ENCODE measurements at regions of chr18 and their contacts with region 1.

Region 1: DNA sequence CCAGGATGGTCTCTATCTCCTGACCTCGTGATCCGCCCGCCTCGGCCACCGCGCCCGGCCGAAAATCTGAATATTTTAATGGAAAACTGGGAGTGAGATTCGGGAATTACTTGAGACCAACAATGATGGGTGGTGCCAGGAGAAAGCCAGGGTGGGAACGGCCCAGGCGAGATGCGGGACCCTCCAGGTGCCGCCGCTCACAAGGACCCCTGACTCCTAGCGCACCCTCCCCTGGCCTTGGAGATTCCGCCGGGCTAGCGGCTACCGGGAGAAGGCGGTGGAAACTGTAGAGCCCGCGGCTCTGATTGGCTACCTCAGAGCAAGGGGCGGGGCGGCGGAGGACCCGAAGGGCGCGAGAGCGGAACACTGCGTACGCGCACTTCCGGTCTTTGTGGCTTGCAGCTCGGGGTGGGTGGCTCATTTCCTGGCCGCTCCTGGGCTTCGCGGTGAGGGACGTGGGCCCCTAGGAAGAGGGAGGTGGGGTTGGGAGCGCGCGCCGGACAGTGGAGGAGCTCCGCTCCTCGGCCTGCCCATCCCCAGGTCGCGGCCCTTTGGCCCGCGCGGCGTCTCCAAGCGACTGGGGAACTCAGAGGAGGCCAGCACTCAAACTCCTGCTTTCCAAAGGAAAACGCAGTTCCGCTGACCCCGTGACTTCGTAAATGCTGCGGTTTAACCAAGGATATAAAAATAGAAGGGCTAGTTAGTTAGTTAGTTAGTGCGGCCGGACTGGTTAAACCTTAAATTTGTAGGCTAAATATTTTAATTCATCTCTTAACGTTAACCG is at the start of gene ZNF397:
- DNase-seq: peak; percentile 94
- H3K4me3 Mint-ChIP-seq: peak within 1 kb of the TSS; percentile 94
- H3K27ac Mint-ChIP-seq: peak within 1 kb of the TSS; percentile 98
- H3K4me1 Mint-ChIP-seq: peaks cover 11% of the 10 kb centered on the region
- H3K27me3 Mint-ChIP-seq: no peaks in the 10 kb centered on the region
- total RNA-seq, gene ZNF397: 14.6 and 18.4 TPM in 2 replicates

Region 2: DNA sequence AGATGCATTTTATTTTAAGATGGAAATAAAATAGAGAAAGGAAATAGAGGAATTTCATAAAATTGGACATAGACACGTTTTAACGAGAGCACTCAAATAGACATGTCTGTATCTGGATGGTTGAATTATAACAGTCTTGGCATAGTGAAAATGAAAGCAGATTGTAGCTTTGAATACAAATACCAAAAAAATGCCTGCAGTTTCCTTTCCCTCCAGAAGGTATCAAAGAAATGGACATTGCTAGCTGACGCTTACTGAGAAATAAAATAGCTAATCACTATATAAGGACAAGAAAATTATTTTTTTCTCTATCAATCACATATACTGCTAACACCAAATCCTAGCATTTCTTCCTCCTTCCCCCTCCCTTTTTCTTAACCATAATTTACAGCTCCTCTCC is 211.1 kb before region 1 on chr18:
- intact Hi-C with region 1: loop called (anchors 5 kb)
- DNase-seq: no peak
- H3K4me3 Mint-ChIP-seq: peak overlapping the region; percentile 80
- H3K27ac Mint-ChIP-seq: peak overlapping the region; percentile 98
- H3K4me1 Mint-ChIP-seq: peaks cover 54% of the 10 kb centered on the region
- H3K27me3 Mint-ChIP-seq: no peaks in the 10 kb centered on the region

Region 3: GRCh38 chr18:35290073-35290735 is 49.3 kb after region 1 on chr18 and contains the start of gene ZSCAN30:
- intact Hi-C with region 1: loop called (anchors 1 kb)
- DNase-seq: peak; percentile 93
- H3K4me3 Mint-ChIP-seq: peak within 1 kb of the TSS; percentile 98
- H3K27ac Mint-ChIP-seq: peak within 1 kb of the TSS; percentile 94
- H3K4me1 Mint-ChIP-seq: peaks cover 29% of the 10 kb centered on the region
- H3K27me3 Mint-ChIP-seq: no peaks in the 10 kb centered on the region
- total RNA-seq, gene ZSCAN30: 15.5 and 19.9 TPM in 2 replicates

Region 4: DNA sequence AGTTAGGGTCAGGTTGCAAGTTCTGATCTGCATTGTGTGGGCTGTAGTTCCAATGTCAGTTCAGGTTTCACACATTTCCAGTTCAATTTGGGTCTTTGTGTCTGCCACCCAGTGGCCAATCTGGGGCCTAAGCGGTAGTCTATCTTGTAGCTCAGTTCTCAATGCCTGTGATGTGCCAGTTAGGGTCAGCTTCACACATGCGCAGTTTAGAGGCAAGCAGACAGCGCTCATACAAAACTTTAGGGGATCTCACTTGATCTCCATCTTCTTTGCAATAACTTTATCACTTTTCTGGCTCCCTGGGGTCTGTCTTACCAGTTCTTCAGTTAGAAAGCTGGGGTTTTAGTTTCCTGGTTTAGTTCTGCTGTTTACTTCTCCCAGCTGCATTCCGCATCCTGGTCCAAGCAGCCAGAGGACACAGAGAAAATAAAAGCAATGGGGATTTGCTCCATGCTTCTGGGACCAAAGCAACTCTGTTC is 114.3 kb after region 1 on chr18:
- intact Hi-C with region 1: no loop called
- DNase-seq: peak; percentile 31
- H3K4me3 Mint-ChIP-seq: no peak overlapping the region
- H3K27ac Mint-ChIP-seq: no peak overlapping the region
- H3K4me1 Mint-ChIP-seq: peaks cover 2% of the 10 kb centered on the region
- H3K27me3 Mint-ChIP-seq: no peaks in the 10 kb centered on the region

Region 5: DNA sequence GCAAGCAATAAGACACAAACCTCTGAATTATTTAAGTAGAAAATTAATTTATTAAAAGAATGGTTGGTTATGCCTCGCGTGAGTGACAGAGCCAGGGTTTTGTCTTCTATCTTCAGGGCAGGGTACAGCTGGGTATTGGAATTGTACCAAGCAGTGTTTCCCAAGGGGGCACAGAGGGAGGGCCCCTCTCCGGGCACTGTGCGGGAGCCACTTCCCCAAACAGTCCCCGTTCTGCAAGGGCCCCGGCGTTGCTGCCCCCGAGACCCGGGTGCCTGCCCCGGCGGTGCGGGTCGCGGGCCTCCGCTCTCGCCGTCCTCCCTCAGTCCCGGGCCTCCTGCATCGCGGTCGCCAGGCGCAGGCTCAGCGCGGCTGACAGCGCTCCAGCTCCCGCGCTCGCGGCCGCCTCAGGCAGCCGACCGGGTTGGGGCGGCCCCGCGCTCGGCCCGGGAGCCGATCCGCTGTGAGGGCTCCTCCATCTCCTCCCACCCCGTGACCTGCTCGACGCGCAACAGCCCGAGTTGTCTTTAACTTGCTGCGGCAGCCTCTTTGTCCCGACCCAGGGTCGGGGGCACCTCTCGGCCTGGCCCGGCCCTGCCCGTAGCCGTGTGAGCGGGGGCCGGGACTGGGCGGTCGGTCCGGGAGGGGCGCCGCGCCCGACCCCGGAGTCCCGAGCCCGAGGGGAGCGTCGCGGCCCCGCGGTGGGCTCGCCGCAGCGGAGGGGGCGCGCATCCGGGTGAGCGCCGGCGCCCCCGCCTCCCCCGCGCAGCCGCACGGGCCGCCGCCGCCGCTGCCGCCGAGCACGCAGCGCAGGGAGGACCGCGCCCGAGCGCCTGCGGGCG is 340.1 kb after region 1 on chr18:
- intact Hi-C with region 1: loop called (anchors 5 kb)
- DNase-seq: peak; percentile 43
- H3K4me3 Mint-ChIP-seq: peak overlapping the region; percentile 68
- H3K27ac Mint-ChIP-seq: peak overlapping the region; percentile 51
- H3K4me1 Mint-ChIP-seq: peaks cover 27% of the 10 kb centered on the region
- H3K27me3 Mint-ChIP-seq: peaks cover 22% of the 10 kb centered on the region